Activated CD4-positive, alpha-beta memory T cell treated with anti-CD3 and anti-CD28 coated beads for 36 hours (primary cell): ENCODE measurements at regions of chr5 and their contacts with region 1.

Region 1: GRCh38 chr5:10863763-10864383 is 102.8 kb upstream of the DAP start:
- DNase-seq: peak; percentile 70
- H3K4me3 Mint-ChIP-seq: no peak overlapping the region
- H3K27ac Mint-ChIP-seq: no peak overlapping the region
- H3K4me1 Mint-ChIP-seq: peaks cover 2% of the 10 kb centered on the region
- H3K27me3 Mint-ChIP-seq: peaks cover 3% of the 10 kb centered on the region

Region 2: GRCh38 chr5:10452768-10453331 is 411.0 kb before region 1 on chr5:
- CTCF ChIA-PET with region 1: interaction called, 4 read pairs
- POLR2A ChIA-PET with region 1: no interaction called
- intact Hi-C with region 1: loop called (anchors 10 kb)
- DNase-seq: no peak
- H3K4me3 Mint-ChIP-seq: no peak overlapping the region
- H3K27ac Mint-ChIP-seq: no peak overlapping the region
- H3K4me1 Mint-ChIP-seq: peaks cover 5% of the 10 kb centered on the region
- H3K27me3 Mint-ChIP-seq: no peaks in the 10 kb centered on the region

Region 3: GRCh38 chr5:10695055-10695649 is 168.7 kb before region 1 on chr5:
- CTCF ChIA-PET with region 1: no interaction called
- POLR2A ChIA-PET with region 1: no interaction called
- intact Hi-C with region 1: loop called (anchors 10 kb)
- DNase-seq: peak; percentile 37
- H3K4me3 Mint-ChIP-seq: no peak overlapping the region
- H3K27ac Mint-ChIP-seq: no peak overlapping the region
- H3K4me1 Mint-ChIP-seq: peaks cover 12% of the 10 kb centered on the region
- H3K27me3 Mint-ChIP-seq: no peaks in the 10 kb centered on the region

Region 4: GRCh38 chr5:11573140-11573992 is 709.5 kb after region 1 on chr5:
- CTCF ChIA-PET with region 1: no interaction called
- POLR2A ChIA-PET with region 1: no interaction called
- intact Hi-C with region 1: no loop called
- DNase-seq: no peak
- H3K4me3 Mint-ChIP-seq: no peak overlapping the region
- H3K27ac Mint-ChIP-seq: no peak overlapping the region
- H3K4me1 Mint-ChIP-seq: no peaks in the 10 kb centered on the region
- H3K27me3 Mint-ChIP-seq: no peaks in the 10 kb centered on the region